Aorta (tissue), 5 donors: ENCODE measurements at regions of chr19 and their contacts with region 1.

Region 1: GRCh38 chr19:57682226-57682766 is 519 bp downstream of the ZNF551 start:
- DNase-seq: no peak
- ATAC-seq: peak; percentile 64
- H3K4me3 ChIP-seq: peak overlapping the region; percentile 67 to 97
- H3K27ac ChIP-seq: no peak overlapping the region
- H3K4me1 ChIP-seq: no peaks in the 10 kb centered on the region
- H3K27me3 ChIP-seq: no peaks in the 10 kb centered on the region

Region 2: DNA sequence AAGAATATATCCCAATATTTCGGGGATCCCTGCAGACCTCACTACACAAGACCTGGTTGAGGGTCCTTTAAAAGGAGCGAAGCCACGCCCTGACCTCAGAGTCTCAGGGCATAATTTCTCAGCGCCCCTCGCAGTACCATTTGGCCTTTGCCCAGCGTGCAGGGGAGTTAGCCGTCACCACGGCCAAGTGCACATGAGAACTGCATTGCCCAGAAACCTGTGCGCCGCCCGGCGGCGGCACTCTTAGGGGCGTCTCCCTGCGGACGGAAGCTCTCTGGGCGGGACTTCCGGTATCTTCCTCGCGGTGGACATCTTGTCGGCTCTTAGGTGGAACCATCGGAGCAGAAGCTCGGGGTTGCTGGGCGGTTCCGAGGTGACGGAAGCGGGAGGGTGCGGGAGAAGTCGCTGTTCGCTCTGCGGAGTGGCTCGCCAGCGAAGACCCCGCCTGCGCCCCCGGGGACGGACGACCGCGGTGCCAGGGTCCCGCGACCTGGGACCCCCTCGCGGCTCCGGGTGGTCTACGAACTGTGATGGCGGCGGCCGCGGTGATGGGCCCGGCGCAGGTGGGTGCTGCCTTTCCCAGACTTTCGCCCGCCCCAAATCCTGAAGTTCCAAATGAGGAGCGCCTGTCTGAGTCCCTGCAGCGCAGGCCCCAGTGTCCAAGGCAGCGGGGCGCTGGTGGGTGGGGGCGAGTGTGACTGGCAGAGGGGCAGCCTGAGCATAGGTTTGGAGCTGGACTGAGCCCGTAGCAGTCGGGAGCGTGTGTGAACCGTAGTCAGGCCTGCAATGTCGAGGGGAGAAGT is 68.2 kb before region 1 on chr19 and contains the start of gene ZNF134:
- intact Hi-C with region 1: loop called in 1 of 2 experiments (anchors 5 kb)
- DNase-seq: peak; percentile 95 to 97
- ATAC-seq: peak; percentile 97
- H3K4me3 ChIP-seq: peak within 1 kb of the TSS; percentile 46 to 65
- H3K27ac ChIP-seq: no peak within 1 kb of the TSS
- H3K4me1 ChIP-seq: no peaks in the 10 kb centered on the region
- H3K27me3 ChIP-seq: no peaks in the 10 kb centered on the region
- total RNA-seq, gene ZNF134: 13.1 to 16.6 TPM

Region 3: DNA sequence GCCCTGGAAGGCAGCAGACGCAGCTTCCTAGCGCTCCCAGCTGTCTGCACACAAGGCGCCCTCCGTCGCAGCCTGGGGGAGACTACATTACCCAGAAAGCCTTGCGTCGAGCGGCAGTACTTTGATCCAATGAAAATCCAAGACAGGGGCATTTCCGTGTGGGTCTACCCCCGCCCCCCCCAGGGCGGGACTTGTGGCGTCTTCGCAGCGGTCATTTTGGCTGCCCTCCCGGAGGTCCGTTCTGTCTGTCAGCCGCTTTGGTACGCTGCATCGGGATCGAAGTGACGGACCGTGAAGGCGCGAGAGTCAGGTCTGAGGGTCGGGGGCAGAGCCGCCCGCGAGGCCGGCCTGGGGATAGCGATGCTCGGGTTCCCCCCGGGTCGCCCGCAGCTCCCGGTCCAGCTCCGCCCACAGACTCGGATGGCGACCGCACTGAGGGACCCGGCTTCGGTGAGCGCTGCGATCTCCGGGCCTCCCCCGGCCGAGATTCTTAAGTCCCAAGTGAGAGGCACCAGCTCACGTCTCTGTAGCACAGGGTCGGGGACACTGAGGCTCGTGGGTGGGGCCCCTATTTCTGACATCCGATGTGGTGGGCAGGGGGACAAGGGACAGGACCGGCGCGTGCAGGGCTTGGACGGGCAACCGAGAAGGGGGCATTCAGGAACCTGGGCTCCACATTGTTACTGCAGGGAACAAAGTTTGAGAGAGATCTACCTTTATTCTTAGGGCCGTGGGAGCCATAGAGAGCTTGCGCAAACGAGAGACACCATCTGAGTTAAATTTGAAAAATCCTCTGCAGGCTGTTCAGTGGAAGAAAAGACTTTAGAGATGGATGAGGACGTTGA is 49.1 kb before region 1 on chr19 and contains the start of gene ZNF211:
- intact Hi-C with region 1: loop called in 1 of 2 experiments (anchors 5 kb)
- DNase-seq: peak; percentile 95 to 96
- ATAC-seq: peak; percentile 99
- H3K4me3 ChIP-seq: peak within 1 kb of the TSS; percentile 22 to 49
- H3K27ac ChIP-seq: no peak within 1 kb of the TSS
- H3K4me1 ChIP-seq: no peaks in the 10 kb centered on the region
- H3K27me3 ChIP-seq: no peaks in the 10 kb centered on the region
- total RNA-seq, gene ZNF211: 8.9 to 14.8 TPM

Region 4: GRCh38 chr19:57706346-57706745 is 24.1 kb after region 1 on chr19:
- intact Hi-C with region 1: no loop called
- DNase-seq: no peak
- ATAC-seq: no peak
- H3K4me3 ChIP-seq: no peak overlapping the region
- H3K27ac ChIP-seq: no peak overlapping the region
- H3K4me1 ChIP-seq: no peaks in the 10 kb centered on the region
- H3K27me3 ChIP-seq: no peaks in the 10 kb centered on the region